ENCODE measurements at regions of chr10 and their contacts with region 1.

Region 1: GRCh38 chr10:32190890-32191491 is 134.8 kb upstream of the KIF5B start:
- DNase-seq: no peak
- H3K4me3 Mint-ChIP-seq: no peak overlapping the region
- H3K27ac Mint-ChIP-seq: no peak overlapping the region
- H3K4me1 Mint-ChIP-seq: peaks cover 4% of the 10 kb centered on the region
- H3K27me3 Mint-ChIP-seq: peaks cover 5% of the 10 kb centered on the region

Region 2: DNA sequence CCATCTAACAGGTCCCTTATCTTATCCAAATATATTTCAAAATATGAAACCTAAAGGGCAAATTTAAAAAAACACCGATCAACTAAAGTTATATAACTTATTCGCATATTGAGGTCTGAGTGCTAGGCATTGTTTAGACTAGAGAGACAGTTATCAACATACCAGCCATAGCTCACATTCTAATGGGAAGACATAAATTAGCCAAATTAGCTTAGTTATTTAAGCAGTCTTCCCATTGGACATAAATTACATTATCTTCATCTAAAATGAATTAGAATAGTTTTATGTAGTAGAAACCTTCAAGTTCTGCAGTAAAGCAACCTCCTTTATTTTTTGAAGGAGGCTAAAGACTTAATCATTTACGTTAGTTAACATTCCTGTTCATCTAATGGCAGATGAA is 152.2 kb before region 1 on chr10:
- intact Hi-C with region 1: no loop called
- DNase-seq: no peak
- H3K4me3 Mint-ChIP-seq: no peak overlapping the region
- H3K27ac Mint-ChIP-seq: no peak overlapping the region
- H3K4me1 Mint-ChIP-seq: peaks cover 30% of the 10 kb centered on the region
- H3K27me3 Mint-ChIP-seq: no peaks in the 10 kb centered on the region

Region 3: GRCh38 chr10:32225976-32226375 is 35.0 kb after region 1 on chr10:
- intact Hi-C with region 1: no loop called
- DNase-seq: no peak
- H3K4me3 Mint-ChIP-seq: no peak overlapping the region
- H3K27ac Mint-ChIP-seq: no peak overlapping the region
- H3K4me1 Mint-ChIP-seq: no peaks in the 10 kb centered on the region
- H3K27me3 Mint-ChIP-seq: peaks cover 3% of the 10 kb centered on the region

Region 4: DNA sequence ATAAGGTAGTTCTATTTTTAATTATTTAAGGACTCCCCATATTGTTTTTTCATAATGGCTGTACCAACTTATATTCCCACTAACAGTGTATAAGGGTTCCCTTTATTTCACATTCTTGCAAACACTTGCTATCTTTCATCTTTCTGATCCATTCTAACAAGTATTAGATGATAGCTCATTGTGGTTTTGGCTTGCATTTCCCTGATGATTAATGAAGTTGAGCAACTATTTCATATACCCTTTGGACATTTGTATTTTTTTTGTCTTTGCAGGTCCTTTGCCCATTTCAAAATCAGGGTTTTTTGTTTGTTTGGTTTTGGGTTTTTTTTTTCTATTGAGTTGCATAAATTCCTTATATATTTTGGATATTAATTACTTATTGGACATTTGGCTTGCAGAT is 48.8 kb after region 1 on chr10:
- intact Hi-C with region 1: loop called (anchors 2 kb)
- DNase-seq: no peak
- H3K4me3 Mint-ChIP-seq: no peak overlapping the region
- H3K27ac Mint-ChIP-seq: no peak overlapping the region
- H3K4me1 Mint-ChIP-seq: peaks cover 12% of the 10 kb centered on the region
- H3K27me3 Mint-ChIP-seq: no peaks in the 10 kb centered on the region

Region 5: GRCh38 chr10:32367793-32368453 is 176.9 kb after region 1 on chr10:
- intact Hi-C with region 1: loop called (anchors 1 kb)
- DNase-seq: peak; percentile 58
- H3K4me3 Mint-ChIP-seq: no peak overlapping the region
- H3K27ac Mint-ChIP-seq: no peak overlapping the region
- H3K4me1 Mint-ChIP-seq: peaks cover 22% of the 10 kb centered on the region
- H3K27me3 Mint-ChIP-seq: no peaks in the 10 kb centered on the region

Measured in activated T-helper 2 cell treated with anti-CD3 and anti-CD28 coated beads, Interferon-gamma antibody, Interleukin-2, Interleukin-4, amounts not matched to agents 10 μg/mL and 5 μg/mL and 100 μg/mL, durations not matched to agents 14 hours and 24 hours and 36 hours (primary cell).